ENCODE measurements at regions of chr2 and their contacts with region 1.

Region 1: GRCh38 chr2:207473049-207473930 is 56.5 kb upstream of the CREB1 start:
- DNase-seq: peak in 1 of 2 donors; percentile 62
- ATAC-seq: peak; percentile 68 to 89 (median 87)
- H3K4me3 ChIP-seq: peak overlapping the region in 3 of 10 donors; percentile 9 to 34 (median 18)
- H3K27ac ChIP-seq: peak overlapping the region in 5 of 10 donors; percentile 32 to 52 (median 42)
- H3K4me1 ChIP-seq: peaks cover 0 to 30% (median 23%) of the 10 kb centered on the region in 9 donors
- H3K27me3 ChIP-seq: no peaks in the 10 kb centered on the region
- CTCF ChIP-seq: peak; percentile 49 to 87 (median 67)

Region 2: DNA sequence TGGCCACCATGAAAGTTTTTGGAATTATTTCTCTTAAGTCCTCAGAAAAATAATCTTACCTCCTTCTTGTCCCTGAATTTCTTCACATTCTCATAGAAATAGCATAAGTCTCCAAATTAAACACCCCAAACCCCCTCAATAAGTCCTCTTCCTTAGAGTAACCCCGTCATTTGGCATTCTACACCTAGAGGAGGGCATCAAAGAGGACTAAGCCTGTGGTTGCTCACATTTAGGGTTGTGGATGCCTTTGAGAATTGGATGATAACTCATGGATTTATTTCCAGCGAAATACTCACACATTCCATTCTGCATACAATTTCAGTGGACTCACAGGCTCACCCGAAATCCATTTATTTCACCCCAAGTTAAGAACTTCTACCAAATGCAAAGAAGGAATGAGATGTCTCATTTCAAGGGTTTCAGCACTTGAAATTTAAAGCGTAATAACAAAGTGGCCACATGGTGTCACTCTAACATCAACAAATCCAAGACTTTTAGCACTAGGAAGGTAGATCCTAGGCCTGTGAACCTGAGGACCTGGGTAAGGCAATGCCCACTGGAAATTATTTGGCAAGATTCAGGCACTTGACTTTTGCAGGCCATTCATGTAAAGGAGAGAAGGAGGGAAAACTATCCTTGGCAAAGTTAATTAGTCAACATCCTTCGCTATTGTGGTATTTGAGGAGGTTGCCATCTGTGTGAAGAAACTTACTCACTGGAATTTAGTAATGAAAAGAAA is 779.7 kb before region 1 on chr2:
- intact Hi-C with region 1: loop called in 7 of 10 experiments (anchors 2 to 10 kb)
- DNase-seq: peak in 1 of 2 donors; percentile 22
- ATAC-seq: peak in 4 of 8 donors; percentile 37 to 64 (median 57)
- H3K4me3 ChIP-seq: no peak overlapping the region
- H3K27ac ChIP-seq: no peak overlapping the region
- H3K4me1 ChIP-seq: no peaks in the 10 kb centered on the region
- H3K27me3 ChIP-seq: no peaks in the 10 kb centered on the region
- CTCF ChIP-seq: peak; percentile 42 to 81 (median 67)

Region 3: GRCh38 chr2:206805887-206806607 is 667.2 kb before region 1 on chr2:
- intact Hi-C with region 1: loop called in 8 of 10 experiments (anchors 1 to 5 kb)
- DNase-seq: no peak
- ATAC-seq: no peak
- H3K4me3 ChIP-seq: no peak overlapping the region
- H3K27ac ChIP-seq: no peak overlapping the region
- H3K4me1 ChIP-seq: peaks cover 0 to 15% (median 2%) of the 10 kb centered on the region in 9 donors
- H3K27me3 ChIP-seq: no peaks in the 10 kb centered on the region
- CTCF ChIP-seq: no peak

Region 4: GRCh38 chr2:206989306-206989705 is 484.0 kb before region 1 on chr2:
- intact Hi-C with region 1: loop called in 3 of 10 experiments (anchors 2 to 5 kb)
- DNase-seq: peak in 1 of 2 donors; percentile 27
- ATAC-seq: peak in 7 of 8 donors; percentile 52 to 88 (median 82)
- H3K4me3 ChIP-seq: no peak overlapping the region
- H3K27ac ChIP-seq: no peak overlapping the region
- H3K4me1 ChIP-seq: peaks cover 0 to 12% (median 0%) of the 10 kb centered on the region in 9 donors
- H3K27me3 ChIP-seq: no peaks in the 10 kb centered on the region
- CTCF ChIP-seq: peak; percentile 38 to 80 (median 74)

Region 5: GRCh38 chr2:207149249-207150213 is 323.8 kb before region 1 on chr2:
- intact Hi-C with region 1: loop called in 1 of 10 experiments (anchors 10 kb)
- DNase-seq: peak in 1 of 2 donors; percentile 30
- ATAC-seq: peak; percentile 43 to 87 (median 76)
- H3K4me3 ChIP-seq: no peak overlapping the region
- H3K27ac ChIP-seq: peak overlapping the region in 8 of 10 donors; percentile 20 to 100 (median 53)
- H3K4me1 ChIP-seq: peaks cover 27 to 100% (median 99%) of the 10 kb centered on the region in 9 donors
- H3K27me3 ChIP-seq: no peaks in the 10 kb centered on the region
- CTCF ChIP-seq: no peak

Region 6: GRCh38 chr2:207258263-207258991 is 214.9 kb before region 1 on chr2:
- intact Hi-C with region 1: loop called in 1 of 10 experiments (anchors 5 kb)
- DNase-seq: peak; percentile 34 to 71
- ATAC-seq: peak; percentile 78 to 90 (median 86)
- H3K4me3 ChIP-seq: no peak overlapping the region
- H3K27ac ChIP-seq: peak overlapping the region in 9 of 10 donors; percentile 39 to 69 (median 65)
- H3K4me1 ChIP-seq: peaks cover 15 to 58% (median 40%) of the 10 kb centered on the region in 9 donors
- H3K27me3 ChIP-seq: no peaks in the 10 kb centered on the region
- CTCF ChIP-seq: no peak

Region 7: GRCh38 chr2:207334624-207335371 is 138.5 kb before region 1 on chr2:
- intact Hi-C with region 1: loop called in 2 of 10 experiments (anchors 5 kb)
- DNase-seq: peak; percentile 60 to 80
- ATAC-seq: peak; percentile 54 to 88 (median 85)
- H3K4me3 ChIP-seq: peak overlapping the region in 9 of 10 donors; percentile 2 to 41 (median 31)
- H3K27ac ChIP-seq: peak overlapping the region; percentile 60 to 96 (median 92)
- H3K4me1 ChIP-seq: peaks cover 0 to 82% (median 50%) of the 10 kb centered on the region in 9 donors
- H3K27me3 ChIP-seq: no peaks in the 10 kb centered on the region
- CTCF ChIP-seq: peak in 2 of 9 donors; percentile 8 to 14

Region 8: GRCh38 chr2:207584952-207585351 is 111.7 kb after region 1 on chr2:
- intact Hi-C with region 1: no loop called
- DNase-seq: peak in 1 of 2 donors; percentile 34
- ATAC-seq: peak in 5 of 8 donors; percentile 29 to 78 (median 65)
- H3K4me3 ChIP-seq: no peak overlapping the region
- H3K27ac ChIP-seq: no peak overlapping the region
- H3K4me1 ChIP-seq: peaks cover 0 to 11% (median 0%) of the 10 kb centered on the region in 9 donors
- H3K27me3 ChIP-seq: no peaks in the 10 kb centered on the region
- CTCF ChIP-seq: no peak

Region 9: GRCh38 chr2:207694811-207695281 is 221.6 kb after region 1 on chr2:
- intact Hi-C with region 1: no loop called
- DNase-seq: no peak
- ATAC-seq: no peak
- H3K4me3 ChIP-seq: no peak overlapping the region
- H3K27ac ChIP-seq: no peak overlapping the region
- H3K4me1 ChIP-seq: peaks cover 0 to 28% (median 9%) of the 10 kb centered on the region in 9 donors
- H3K27me3 ChIP-seq: no peaks in the 10 kb centered on the region
- CTCF ChIP-seq: no peak

Measured in heart right ventricle (tissue), 16 donors.